CD4-positive, alpha-beta T cell (primary cell): ENCODE measurements at regions of chr3 and their contacts with region 1.

Region 1: GRCh38 chr3:19866751-19867347 is 67.2 kb downstream of the EFHB start:
- DNase-seq: peak in 10 of 14 experiments; percentile 1 to 62 (median 10)
- ATAC-seq: peak; percentile 49
- H3K4me3 ChIP-seq: no peak overlapping the region
- H3K4me3 Mint-ChIP-seq: no peak overlapping the region
- H3K27ac ChIP-seq: no peak overlapping the region
- H3K27ac Mint-ChIP-seq: no peak overlapping the region
- H3K4me1 ChIP-seq: no peaks in the 10 kb centered on the region
- H3K4me1 Mint-ChIP-seq: no peaks in the 10 kb centered on the region
- H3K27me3 ChIP-seq: no peaks in the 10 kb centered on the region
- H3K27me3 Mint-ChIP-seq: peaks cover 9% of the 10 kb centered on the region
- CTCF ChIP-seq: peak; percentile 86

Region 2: GRCh38 chr3:18740631-18741583 is 1125.9 kb before region 1 on chr3:
- CTCF ChIA-PET with region 1: no interaction called
- POLR2A ChIA-PET with region 1: no interaction called
- intact Hi-C with region 1: no loop called
- DNase-seq: peak; percentile 15 to 92 (median 42)
- ATAC-seq: peak; percentile 76
- H3K4me3 ChIP-seq: peak overlapping the region; percentile 28
- H3K4me3 Mint-ChIP-seq: peak overlapping the region; percentile 76
- H3K27ac ChIP-seq: peak overlapping the region; percentile 46 to 87
- H3K27ac Mint-ChIP-seq: peak overlapping the region; percentile 90
- H3K4me1 ChIP-seq: peaks cover 38% of the 10 kb centered on the region
- H3K4me1 Mint-ChIP-seq: peaks cover 87% of the 10 kb centered on the region
- H3K27me3 ChIP-seq: no peaks in the 10 kb centered on the region
- H3K27me3 Mint-ChIP-seq: no peaks in the 10 kb centered on the region
- CTCF ChIP-seq: no peak

Region 3: DNA sequence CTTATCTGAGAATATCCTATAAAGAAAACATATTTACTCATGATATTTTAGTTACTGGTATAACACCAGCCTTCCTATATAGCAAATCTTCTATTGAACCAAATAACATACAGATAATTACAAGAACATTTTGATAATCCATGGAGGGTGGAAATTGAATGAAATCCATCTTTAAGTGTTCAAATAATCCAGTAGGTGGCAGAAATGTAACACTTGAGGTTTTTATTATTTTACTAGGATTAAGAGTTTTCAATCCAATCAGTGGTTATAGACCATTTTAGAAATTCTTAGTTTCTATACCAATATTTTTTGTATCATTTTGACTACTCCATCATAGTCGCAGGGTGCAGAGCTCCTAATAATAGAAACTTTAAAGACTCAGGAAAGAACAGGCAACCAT is 820.4 kb before region 1 on chr3:
- CTCF ChIA-PET with region 1: no interaction called
- POLR2A ChIA-PET with region 1: no interaction called
- intact Hi-C with region 1: loop called (anchors 5 kb)
- DNase-seq: no peak
- ATAC-seq: no peak
- H3K4me3 ChIP-seq: no peak overlapping the region
- H3K4me3 Mint-ChIP-seq: no peak overlapping the region
- H3K27ac ChIP-seq: no peak overlapping the region
- H3K27ac Mint-ChIP-seq: no peak overlapping the region
- H3K4me1 ChIP-seq: no peaks in the 10 kb centered on the region
- H3K4me1 Mint-ChIP-seq: no peaks in the 10 kb centered on the region
- H3K27me3 ChIP-seq: no peaks in the 10 kb centered on the region
- H3K27me3 Mint-ChIP-seq: no peaks in the 10 kb centered on the region
- CTCF ChIP-seq: no peak

Region 4: GRCh38 chr3:19065027-19065426 is 801.8 kb before region 1 on chr3:
- CTCF ChIA-PET with region 1: no interaction called
- POLR2A ChIA-PET with region 1: no interaction called
- intact Hi-C with region 1: loop called in 1 of 2 experiments (anchors 2 kb)
- DNase-seq: peak in 2 of 14 experiments; percentile 11 to 19
- ATAC-seq: no peak
- H3K4me3 ChIP-seq: no peak overlapping the region
- H3K4me3 Mint-ChIP-seq: no peak overlapping the region
- H3K27ac ChIP-seq: no peak overlapping the region
- H3K27ac Mint-ChIP-seq: no peak overlapping the region
- H3K4me1 ChIP-seq: no peaks in the 10 kb centered on the region
- H3K4me1 Mint-ChIP-seq: no peaks in the 10 kb centered on the region
- H3K27me3 ChIP-seq: no peaks in the 10 kb centered on the region
- H3K27me3 Mint-ChIP-seq: no peaks in the 10 kb centered on the region
- CTCF ChIP-seq: peak; percentile 31

Region 5: GRCh38 chr3:19348929-19349564 is 517.8 kb before region 1 on chr3:
- CTCF ChIA-PET with region 1: no interaction called
- POLR2A ChIA-PET with region 1: no interaction called
- intact Hi-C with region 1: loop called (anchors 5 to 10 kb)
- DNase-seq: peak in 3 of 14 experiments; percentile 6 to 17 (median 16)
- ATAC-seq: no peak
- H3K4me3 ChIP-seq: no peak overlapping the region
- H3K4me3 Mint-ChIP-seq: no peak overlapping the region
- H3K27ac ChIP-seq: no peak overlapping the region
- H3K27ac Mint-ChIP-seq: no peak overlapping the region
- H3K4me1 ChIP-seq: no peaks in the 10 kb centered on the region
- H3K4me1 Mint-ChIP-seq: no peaks in the 10 kb centered on the region
- H3K27me3 ChIP-seq: no peaks in the 10 kb centered on the region
- H3K27me3 Mint-ChIP-seq: peaks cover 5% of the 10 kb centered on the region
- CTCF ChIP-seq: peak; percentile 53

Region 6: DNA sequence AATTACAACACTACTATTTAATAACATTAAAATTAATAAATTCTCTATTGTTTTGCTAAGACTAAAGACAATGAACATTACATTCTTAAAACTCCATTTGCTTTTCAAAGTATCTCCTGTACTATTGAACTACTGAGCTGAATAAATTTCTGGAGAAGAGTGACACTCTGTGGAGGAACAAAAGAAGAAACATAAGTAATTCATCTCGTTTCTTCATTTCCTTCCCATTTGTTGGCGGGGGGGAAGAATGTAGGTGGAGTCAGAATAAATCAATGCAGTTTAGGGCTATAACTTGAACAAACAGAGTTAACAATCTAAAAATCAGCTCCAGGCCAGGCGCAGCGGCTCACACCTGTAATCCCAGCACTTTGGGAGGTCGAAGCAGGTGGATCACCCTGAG is 34.5 kb after region 1 on chr3:
- CTCF ChIA-PET with region 1: no interaction called
- POLR2A ChIA-PET with region 1: no interaction called
- intact Hi-C with region 1: no loop called
- DNase-seq: no peak
- ATAC-seq: no peak
- H3K4me3 ChIP-seq: no peak overlapping the region
- H3K4me3 Mint-ChIP-seq: no peak overlapping the region
- H3K27ac ChIP-seq: no peak overlapping the region
- H3K27ac Mint-ChIP-seq: no peak overlapping the region
- H3K4me1 ChIP-seq: no peaks in the 10 kb centered on the region
- H3K4me1 Mint-ChIP-seq: no peaks in the 10 kb centered on the region
- H3K27me3 ChIP-seq: no peaks in the 10 kb centered on the region
- H3K27me3 Mint-ChIP-seq: no peaks in the 10 kb centered on the region
- CTCF ChIP-seq: no peak